ENCODE measurements at regions of chr2 and their contacts with region 1.

Region 1: DNA sequence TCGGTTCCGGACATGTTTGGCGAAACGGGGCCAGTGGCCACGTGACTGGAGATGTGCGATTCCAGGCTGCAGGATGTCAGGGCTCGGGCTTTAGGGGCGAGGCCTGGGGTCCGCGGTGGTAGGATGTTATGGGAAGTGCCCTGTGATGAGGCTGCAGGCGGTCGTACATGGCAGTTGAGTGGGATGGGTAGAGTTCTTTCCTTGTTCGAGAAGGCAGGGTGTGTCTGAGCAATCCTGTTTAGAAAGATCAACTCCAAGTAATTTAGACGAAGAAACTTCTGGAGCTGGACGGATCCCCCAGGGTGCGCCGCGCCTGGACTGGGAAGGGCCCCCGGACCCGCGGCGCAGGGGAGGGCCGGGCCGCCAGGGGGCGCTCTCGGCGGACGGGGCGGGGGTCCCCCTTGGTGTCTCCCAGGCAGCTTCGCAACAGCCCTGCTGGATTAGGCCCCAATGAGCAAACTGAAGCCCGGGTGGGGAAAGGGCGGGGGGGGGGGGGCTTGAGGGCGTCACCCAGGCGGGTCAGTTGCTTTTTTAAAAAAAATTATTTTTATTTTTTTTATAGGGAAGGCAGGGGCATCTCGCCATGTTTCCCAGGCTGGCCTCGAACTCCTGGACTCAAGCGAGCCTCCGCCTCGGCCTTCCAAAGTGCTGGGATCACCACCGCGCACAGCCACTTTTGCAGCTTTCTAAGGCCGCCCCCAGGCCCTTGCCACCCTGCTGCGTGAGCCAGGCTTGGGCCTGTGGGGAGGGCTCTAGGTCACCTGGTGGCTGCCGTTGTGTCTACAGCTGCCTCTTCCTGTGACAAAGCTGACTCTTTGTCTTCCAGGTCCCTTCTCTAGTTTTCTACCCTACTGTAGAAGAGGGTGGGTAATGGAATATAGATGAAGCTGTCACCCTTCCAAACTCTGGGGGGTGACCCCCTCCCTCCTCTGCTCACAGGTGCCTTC is 17.4 kb upstream of the SDC1 start:
- DNase-seq: no peak
- ATAC-seq: peak; percentile 79
- H3K4me3 ChIP-seq: no peak overlapping the region
- H3K27ac ChIP-seq: no peak overlapping the region
- H3K4me1 ChIP-seq: no peaks in the 10 kb centered on the region
- H3K27me3 ChIP-seq: no peaks in the 10 kb centered on the region
- CTCF ChIP-seq: peak; percentile 80

Region 2: GRCh38 chr2:20254731-20255130 is 12.4 kb after region 1 on chr2:
- CTCF ChIA-PET with region 1: interaction called, 14 read pairs
- POLR2A ChIA-PET with region 1: no interaction called
- in situ Hi-C with region 1: no loop called
- intact Hi-C with region 1: no loop called
- DNase-seq: no peak
- ATAC-seq: no peak
- H3K4me3 ChIP-seq: no peak overlapping the region
- H3K27ac ChIP-seq: no peak overlapping the region
- H3K4me1 ChIP-seq: no peaks in the 10 kb centered on the region
- H3K27me3 ChIP-seq: no peaks in the 10 kb centered on the region
- CTCF ChIP-seq: no peak